CD4-positive, alpha-beta T cell (primary cell): ENCODE measurements at regions of chr22 and their contacts with region 1.

Region 1: GRCh38 chr22:19195796-19196731 is 17.5 kb upstream of the SLC25A1 start:
- DNase-seq: no peak
- ATAC-seq: no peak
- H3K4me3 ChIP-seq: no peak overlapping the region
- H3K4me3 Mint-ChIP-seq: no peak overlapping the region
- H3K27ac ChIP-seq: no peak overlapping the region
- H3K27ac Mint-ChIP-seq: no peak overlapping the region
- H3K4me1 ChIP-seq: peaks cover 8% of the 10 kb centered on the region
- H3K4me1 Mint-ChIP-seq: no peaks in the 10 kb centered on the region
- H3K27me3 ChIP-seq: no peaks in the 10 kb centered on the region
- H3K27me3 Mint-ChIP-seq: no peaks in the 10 kb centered on the region
- CTCF ChIP-seq: no peak

Region 2: DNA sequence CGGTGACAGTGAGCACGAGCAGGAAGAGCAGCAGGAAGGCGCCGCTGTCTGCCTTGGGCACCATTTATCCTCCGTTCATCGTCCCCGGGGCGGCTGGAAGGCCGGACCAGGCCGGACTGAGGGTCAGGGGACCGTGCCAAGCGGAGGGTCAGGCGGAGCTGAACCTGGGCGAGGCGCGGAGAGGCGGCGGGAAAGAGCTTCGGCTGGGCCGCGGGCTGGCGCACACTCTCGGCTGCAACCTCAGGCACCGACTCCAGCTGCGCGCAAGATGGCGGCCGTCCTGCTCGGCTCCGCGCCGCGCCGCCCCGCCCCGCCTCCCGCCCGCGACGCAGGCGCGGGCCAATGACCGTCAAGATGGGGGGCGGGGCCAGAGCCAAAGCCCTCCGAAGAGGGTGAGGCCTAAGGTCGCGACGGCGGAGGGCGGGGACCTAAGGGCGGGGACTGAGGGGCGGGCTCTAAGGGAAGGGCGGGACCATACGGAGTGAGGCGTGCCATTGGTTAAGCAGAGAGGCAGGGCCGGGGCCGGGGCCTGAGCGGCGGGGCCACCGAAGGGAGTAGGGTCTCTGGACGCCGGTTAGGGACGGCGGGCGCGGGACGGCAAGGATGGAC is 73.8 kb before region 1 on chr22 and contains the start of gene DGCR2:
- CTCF ChIA-PET with region 1: no interaction called
- POLR2A ChIA-PET with region 1: no interaction called
- intact Hi-C with region 1: no loop called
- DNase-seq: peak; percentile 95 to 99 (median 96)
- ATAC-seq: peak; percentile 97
- H3K4me3 ChIP-seq: peak within 1 kb of the TSS; percentile 95
- H3K4me3 Mint-ChIP-seq: peak within 1 kb of the TSS; percentile 94
- H3K27ac ChIP-seq: peak within 1 kb of the TSS in 1 of 2 donors; percentile 73
- H3K27ac Mint-ChIP-seq: peak within 1 kb of the TSS; percentile 87
- H3K4me1 ChIP-seq: peaks cover 52% of the 10 kb centered on the region
- H3K4me1 Mint-ChIP-seq: peaks cover 52% of the 10 kb centered on the region
- H3K27me3 ChIP-seq: no peaks in the 10 kb centered on the region
- H3K27me3 Mint-ChIP-seq: no peaks in the 10 kb centered on the region
- CTCF ChIP-seq: no peak
- total RNA-seq, gene DGCR2: 31.9 to 35.5 TPM

Region 3: GRCh38 chr22:19152942-19153883 is 42.9 kb before region 1 on chr22:
- CTCF ChIA-PET with region 1: no interaction called
- POLR2A ChIA-PET with region 1: no interaction called
- intact Hi-C with region 1: loop called in 1 of 2 experiments (anchors 2 kb)
- DNase-seq: no peak
- ATAC-seq: no peak
- H3K4me3 ChIP-seq: no peak overlapping the region
- H3K4me3 Mint-ChIP-seq: no peak overlapping the region
- H3K27ac ChIP-seq: no peak overlapping the region
- H3K27ac Mint-ChIP-seq: no peak overlapping the region
- H3K4me1 ChIP-seq: peaks cover 19% of the 10 kb centered on the region
- H3K4me1 Mint-ChIP-seq: peaks cover 9% of the 10 kb centered on the region
- H3K27me3 ChIP-seq: peaks cover 38% of the 10 kb centered on the region in 2 experiments
- H3K27me3 Mint-ChIP-seq: peaks cover 33% of the 10 kb centered on the region
- CTCF ChIP-seq: no peak